CD14-positive monocyte (primary cell): ENCODE measurements at regions of chrX and their contacts with region 1.

Region 1: GRCh38 chrX:49073601-49074571 is at the start of gene PRAF2:
- DNase-seq: peak; percentile 87 to 89 (median 87)
- H3K4me3 ChIP-seq: peak within 1 kb of the TSS; percentile 18 to 71 (median 52)
- H3K4me3 Mint-ChIP-seq: peak within 1 kb of the TSS; percentile 69 to 71
- H3K27ac ChIP-seq: peak within 1 kb of the TSS; percentile 36 to 64
- H3K27ac Mint-ChIP-seq: peak within 1 kb of the TSS; percentile 30 to 86 (median 61)
- H3K4me1 ChIP-seq: peaks cover 20 to 22% of the 10 kb centered on the region in 2 donors
- H3K4me1 Mint-ChIP-seq: peaks cover 24% of the 10 kb centered on the region
- H3K27me3 ChIP-seq: no peaks in the 10 kb centered on the region
- H3K27me3 Mint-ChIP-seq: peaks cover 2 to 11% (median 3%) of the 10 kb centered on the region in 3 donors
- CTCF ChIP-seq: no peak
- polyA plus RNA-seq, gene PRAF2: 4.1 to 7.9 (median 5.5) TPM

Region 2: DNA sequence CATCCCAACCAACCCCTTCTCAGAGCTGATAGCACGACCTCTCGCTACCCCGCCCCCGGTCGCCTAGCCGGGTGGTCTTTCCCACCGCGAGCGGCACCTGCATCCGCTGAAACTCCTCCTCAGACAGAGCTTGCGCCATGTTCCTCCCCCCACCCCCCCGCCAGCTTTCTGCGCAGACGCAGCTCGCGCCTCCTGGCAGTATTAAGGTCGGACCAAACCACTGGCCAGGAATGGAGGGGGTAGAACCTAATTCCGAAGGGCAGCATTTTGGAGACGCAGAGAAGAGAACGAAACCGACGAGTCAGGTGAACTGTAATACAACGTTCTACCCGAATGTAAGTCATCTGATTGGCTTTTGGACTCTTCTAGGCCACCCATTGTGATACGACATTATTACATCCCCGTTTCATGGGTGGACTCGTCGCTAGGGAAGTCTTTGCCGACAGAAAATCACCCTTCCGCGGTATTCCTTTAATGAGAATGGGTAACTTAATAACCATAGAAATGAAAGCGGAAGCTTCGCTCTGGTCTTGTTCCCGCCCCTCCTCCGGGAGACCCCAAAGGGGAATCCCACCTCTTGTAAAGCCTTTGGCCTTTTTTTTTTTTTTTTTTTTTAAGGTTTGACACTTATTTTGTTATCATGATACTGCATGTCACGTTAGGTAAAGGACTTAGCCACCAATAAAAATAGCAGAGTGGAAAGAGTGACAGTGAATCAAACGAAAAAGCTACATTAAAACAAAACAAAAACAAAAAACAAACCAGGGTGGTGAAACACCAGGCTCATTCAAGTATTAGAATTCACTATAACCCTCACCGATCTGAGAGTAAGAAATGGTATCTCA is 71.6 kb before region 1 on chrX and contains the start of gene GRIPAP1:
- intact Hi-C with region 1: loop called in 1 of 2 experiments (anchors 2 kb)
- DNase-seq: peak; percentile 86 to 95 (median 88)
- H3K4me3 ChIP-seq: peak within 1 kb of the TSS; percentile 59 to 95 (median 85)
- H3K4me3 Mint-ChIP-seq: peak within 1 kb of the TSS; percentile 94 to 97
- H3K27ac ChIP-seq: peak within 1 kb of the TSS; percentile 87 to 97
- H3K27ac Mint-ChIP-seq: peak within 1 kb of the TSS; percentile 98 to 100 (median 99)
- H3K4me1 ChIP-seq: peaks cover 13% of the 10 kb centered on the region in 2 donors
- H3K4me1 Mint-ChIP-seq: peaks cover 17% of the 10 kb centered on the region
- H3K27me3 ChIP-seq: no peaks in the 10 kb centered on the region
- H3K27me3 Mint-ChIP-seq: peaks cover 0 to 2% (median 0%) of the 10 kb centered on the region in 3 donors
- CTCF ChIP-seq: no peak
- polyA plus RNA-seq, gene GRIPAP1: 3.8 to 103 (median 10.7) TPM

Region 3: DNA sequence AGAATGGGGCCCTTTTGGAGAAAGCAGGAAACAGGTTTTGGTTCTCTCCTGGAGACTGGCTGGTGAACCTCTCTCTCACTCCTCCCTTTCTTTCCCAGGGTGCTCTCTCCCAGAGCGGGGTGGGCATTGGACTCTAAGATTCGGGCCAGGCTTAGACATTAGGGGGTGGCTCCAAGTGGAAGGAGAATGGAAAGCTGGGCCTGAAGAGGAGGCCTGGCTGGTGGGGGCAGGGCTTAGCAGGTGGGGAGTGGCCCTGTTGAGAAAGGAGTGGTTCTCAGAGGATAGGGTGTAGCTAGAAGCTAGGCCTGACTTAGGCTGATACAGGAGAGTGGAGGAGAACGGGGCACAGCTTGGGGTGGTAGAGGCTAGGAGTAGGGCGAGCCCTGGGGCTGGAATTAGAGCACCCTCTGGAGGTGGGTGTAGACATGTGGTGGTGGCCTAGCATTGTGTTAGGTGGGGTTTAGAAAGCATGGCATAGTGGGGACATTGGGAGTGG is 103.5 kb after region 1 on chrX:
- intact Hi-C with region 1: no loop called
- DNase-seq: peak; percentile 30 to 43 (median 38)
- H3K4me3 ChIP-seq: peak overlapping the region in 1 of 3 experiments; percentile 49
- H3K4me3 Mint-ChIP-seq: peak overlapping the region in 1 of 2 donors; percentile 15
- H3K27ac ChIP-seq: peak overlapping the region; percentile 33 to 66
- H3K27ac Mint-ChIP-seq: peak overlapping the region; percentile 65 to 97 (median 91)
- H3K4me1 ChIP-seq: peaks cover 43 to 56% of the 10 kb centered on the region in 2 donors
- H3K4me1 Mint-ChIP-seq: peaks cover 43% of the 10 kb centered on the region
- H3K27me3 ChIP-seq: no peaks in the 10 kb centered on the region
- H3K27me3 Mint-ChIP-seq: peaks cover 0 to 10% (median 0%) of the 10 kb centered on the region in 3 donors
- CTCF ChIP-seq: no peak